ENCODE measurements at regions of chr11 and their contacts with region 1.

Region 1: DNA sequence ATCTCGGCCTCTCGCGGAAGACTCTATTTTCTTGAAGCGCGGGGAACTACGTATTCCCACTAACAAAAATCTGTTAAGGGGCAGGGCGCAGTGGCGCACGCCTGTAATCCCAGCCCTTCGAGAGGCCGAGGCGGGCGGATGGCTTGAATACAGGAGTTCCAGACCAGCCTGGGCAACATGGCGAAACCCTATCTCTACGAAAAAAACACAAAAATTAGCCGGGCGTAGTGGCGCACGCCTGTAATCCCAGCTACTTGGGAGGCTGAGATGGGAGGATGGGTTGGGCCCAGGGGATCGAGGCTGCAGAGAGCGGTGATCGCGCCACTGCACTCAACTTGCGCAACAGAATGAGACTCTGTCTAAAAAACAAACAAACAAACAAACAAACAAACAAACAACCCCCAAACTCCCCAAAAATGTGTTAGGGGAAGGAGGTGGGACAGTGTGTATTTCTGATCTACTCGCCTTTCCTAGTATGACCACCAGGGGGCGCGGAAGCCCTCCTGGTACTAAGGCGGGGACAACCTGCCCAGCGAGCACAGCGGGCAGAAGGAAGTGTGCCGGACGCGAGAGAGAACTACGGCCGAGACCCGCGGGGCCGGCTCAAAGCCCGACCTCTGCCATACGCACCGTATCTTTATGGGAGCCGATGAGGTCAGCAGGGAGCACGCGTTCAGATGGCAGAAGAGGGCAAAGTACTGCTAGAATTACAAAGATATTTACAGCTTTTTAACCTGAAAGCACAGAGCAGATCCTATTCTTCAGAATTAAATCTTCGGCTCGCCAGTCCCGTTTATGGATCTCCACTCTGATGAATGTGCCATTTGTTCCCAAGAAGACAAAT is 1.3 kb upstream of the STX3 start:
- DNase-seq: peak; percentile 74 to 83 (median 78)
- H3K4me3 ChIP-seq: peak overlapping the region; percentile 76 to 95 (median 86)
- H3K27ac ChIP-seq: peak overlapping the region in 1 of 2 experiments; percentile 56
- H3K4me1 ChIP-seq: peaks cover 7 to 31% (median 28%) of the 10 kb centered on the region in 4 experiments
- H3K27me3 ChIP-seq: no peaks in the 10 kb centered on the region

Region 2: GRCh38 chr11:59733650-59734049 is 20.2 kb before region 1 on chr11:
- CTCF ChIA-PET with region 1: no interaction called
- POLR2A ChIA-PET with region 1: no interaction called
- DNase-seq: no peak
- H3K4me3 ChIP-seq: no peak overlapping the region
- H3K27ac ChIP-seq: no peak overlapping the region
- H3K4me1 ChIP-seq: peaks cover 4 to 8% (median 5%) of the 10 kb centered on the region in 4 experiments
- H3K27me3 ChIP-seq: no peaks in the 10 kb centered on the region

Region 3: GRCh38 chr11:59767225-59767611 is 13.3 kb after region 1 on chr11:
- CTCF ChIA-PET with region 1: interaction called, 45 read pairs
- POLR2A ChIA-PET with region 1: interaction called, 5 read pairs
- DNase-seq: peak; percentile 54 to 88 (median 82)
- H3K4me3 ChIP-seq: peak overlapping the region in 2 of 7 experiments; percentile 20 to 42
- H3K27ac ChIP-seq: no peak overlapping the region
- H3K4me1 ChIP-seq: peaks cover 25 to 68% (median 33%) of the 10 kb centered on the region in 4 experiments
- H3K27me3 ChIP-seq: no peaks in the 10 kb centered on the region

Region 4: GRCh38 chr11:59787816-59788215 is 33.9 kb after region 1 on chr11:
- CTCF ChIA-PET with region 1: interaction called, 16 read pairs
- POLR2A ChIA-PET with region 1: no interaction called
- DNase-seq: no peak
- H3K4me3 ChIP-seq: no peak overlapping the region
- H3K27ac ChIP-seq: no peak overlapping the region
- H3K4me1 ChIP-seq: peaks cover 0 to 17% (median 0%) of the 10 kb centered on the region in 4 experiments
- H3K27me3 ChIP-seq: no peaks in the 10 kb centered on the region

Region 5: GRCh38 chr11:59802639-59803176 is 48.8 kb after region 1 on chr11:
- CTCF ChIA-PET with region 1: interaction called, 74 read pairs
- POLR2A ChIA-PET with region 1: interaction called, 5 read pairs
- DNase-seq: peak; percentile 66 to 75 (median 75)
- H3K4me3 ChIP-seq: no peak overlapping the region
- H3K27ac ChIP-seq: no peak overlapping the region
- H3K4me1 ChIP-seq: peaks cover 6 to 33% (median 26%) of the 10 kb centered on the region in 4 experiments
- H3K27me3 ChIP-seq: no peaks in the 10 kb centered on the region

Region 6: GRCh38 chr11:59810189-59810910 is 56.5 kb after region 1 on chr11 and contains the start of gene MRPL16:
- CTCF ChIA-PET with region 1: interaction called, 65 read pairs
- POLR2A ChIA-PET with region 1: no interaction called
- DNase-seq: peak; percentile 93 to 97 (median 96)
- H3K4me3 ChIP-seq: peak within 1 kb of the TSS; percentile 71 to 99 (median 97)
- H3K27ac ChIP-seq: peak within 1 kb of the TSS; percentile 62 to 88
- H3K4me1 ChIP-seq: peaks cover 20 to 62% (median 45%) of the 10 kb centered on the region in 4 experiments
- H3K27me3 ChIP-seq: no peaks in the 10 kb centered on the region

Measured in common myeloid progenitor, CD34-positive (primary cell).